ENCODE measurements at regions of chr14 and their contacts with region 1.

Region 1: GRCh38 chr14:75941030-75941429 is 40.8 kb downstream of the TGFB3 start:
- DNase-seq: no peak
- ATAC-seq: no peak
- H3K4me3 ChIP-seq: no peak overlapping the region
- H3K27ac ChIP-seq: no peak overlapping the region
- H3K4me1 ChIP-seq: no peaks in the 10 kb centered on the region
- H3K27me3 ChIP-seq: no peaks in the 10 kb centered on the region
- CTCF ChIP-seq: no peak
- EP300 ChIP-seq: no peak
- POLR2A ChIP-seq: no peak
- RAD21 ChIP-seq: no peak

Region 2: DNA sequence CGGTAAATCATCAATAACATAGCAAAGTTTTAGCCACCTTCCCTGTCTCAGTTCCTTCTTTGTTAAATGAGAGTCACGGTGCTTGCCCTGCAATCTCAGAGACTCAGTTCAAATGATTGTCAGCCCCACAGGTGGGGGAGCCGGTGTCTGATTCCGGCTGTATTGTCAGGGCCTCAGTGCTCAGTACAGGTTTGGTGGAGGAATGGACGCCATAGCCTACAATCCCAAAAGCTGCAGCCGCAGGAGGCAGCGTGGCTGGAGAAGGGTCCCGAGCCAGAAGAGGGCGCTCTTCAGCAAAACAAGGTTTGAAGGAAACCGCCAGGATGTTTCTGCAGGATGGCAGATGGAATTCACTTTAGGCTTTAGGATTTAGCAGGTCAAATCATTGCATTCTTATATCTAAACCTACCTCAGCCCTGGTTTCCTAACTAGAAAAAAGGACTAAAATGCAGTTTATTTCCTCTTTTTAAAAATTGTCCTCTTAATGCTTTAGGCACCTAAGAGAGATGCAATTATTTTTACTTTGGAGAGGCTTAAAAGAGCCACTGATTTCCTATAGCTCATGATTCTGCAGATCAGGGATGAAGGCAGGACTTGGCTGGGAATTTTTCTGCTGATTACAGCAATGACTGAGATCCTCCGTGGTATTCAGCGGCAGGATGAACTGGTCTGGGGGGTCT is 633.2 kb before region 1 on chr14:
- CTCF ChIA-PET with region 1: no interaction called
- POLR2A ChIA-PET with region 1: no interaction called
- in situ Hi-C with region 1: no loop called
- intact Hi-C with region 1: no loop called
- DNase-seq: peak; percentile 63
- ATAC-seq: peak; percentile 91
- H3K4me3 ChIP-seq: no peak overlapping the region
- H3K27ac ChIP-seq: no peak overlapping the region
- H3K4me1 ChIP-seq: peaks cover 12% of the 10 kb centered on the region
- H3K27me3 ChIP-seq: peaks cover 0 to 4% of the 10 kb centered on the region in 2 experiments; a peak in 1 of 5 replicates
- CTCF ChIP-seq: peak; percentile 93
- EP300 ChIP-seq: no peak
- POLR2A ChIP-seq: no peak
- RAD21 ChIP-seq: peak; percentile 81

Region 3: DNA sequence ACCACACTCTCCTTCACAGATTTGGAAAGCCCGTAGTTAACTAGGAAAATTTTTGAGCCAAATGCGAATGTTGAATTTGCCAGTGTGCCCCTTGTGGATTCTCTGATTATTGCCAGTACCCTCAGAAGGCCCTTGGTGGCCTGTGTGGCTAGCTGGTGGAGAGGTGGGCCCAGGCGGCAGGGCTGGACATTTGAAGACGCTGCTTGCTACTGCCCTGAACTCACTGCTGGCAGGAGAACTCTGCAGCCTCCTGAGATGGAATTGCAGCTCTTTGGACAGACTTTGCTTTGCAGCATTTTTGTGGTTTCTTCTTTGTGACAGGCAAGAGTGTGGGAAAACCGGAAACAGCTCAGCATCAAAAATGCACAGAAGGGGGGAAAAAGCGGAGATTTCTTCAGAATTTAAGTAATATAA is 56.8 kb before region 1 on chr14:
- CTCF ChIA-PET with region 1: no interaction called
- POLR2A ChIA-PET with region 1: no interaction called
- in situ Hi-C with region 1: no loop called
- intact Hi-C with region 1: no loop called
- DNase-seq: no peak
- ATAC-seq: peak; percentile 71
- H3K4me3 ChIP-seq: no peak overlapping the region
- H3K27ac ChIP-seq: no peak overlapping the region
- H3K4me1 ChIP-seq: no peaks in the 10 kb centered on the region
- H3K27me3 ChIP-seq: no peaks in the 10 kb centered on the region
- CTCF ChIP-seq: no peak
- EP300 ChIP-seq: no peak
- POLR2A ChIP-seq: no peak
- RAD21 ChIP-seq: no peak

Region 4: DNA sequence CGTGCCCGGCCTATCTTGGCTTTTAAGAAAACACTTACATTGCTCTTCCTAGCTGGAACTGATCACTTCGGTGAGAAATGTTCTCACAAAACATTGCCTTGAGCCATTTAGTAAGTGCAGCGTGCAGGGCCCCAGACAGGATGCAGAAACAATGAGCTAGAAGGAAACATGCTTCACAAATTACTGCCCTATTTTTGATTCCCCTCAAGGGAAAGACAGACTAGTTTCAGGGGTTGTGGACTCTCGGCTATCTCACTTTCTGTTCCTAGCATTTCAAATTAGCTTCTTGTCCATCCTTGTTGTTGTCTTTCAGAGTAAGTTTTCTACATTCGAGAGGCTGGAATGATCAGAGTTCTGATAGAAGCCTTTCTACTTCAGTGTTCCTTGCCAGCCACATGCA is 19.2 kb after region 1 on chr14:
- CTCF ChIA-PET with region 1: no interaction called
- POLR2A ChIA-PET with region 1: no interaction called
- in situ Hi-C with region 1: no loop called
- intact Hi-C with region 1: loop called (anchors 1 kb)
- DNase-seq: no peak
- ATAC-seq: no peak
- H3K4me3 ChIP-seq: no peak overlapping the region
- H3K27ac ChIP-seq: no peak overlapping the region
- H3K4me1 ChIP-seq: no peaks in the 10 kb centered on the region
- H3K27me3 ChIP-seq: no peaks in the 10 kb centered on the region
- CTCF ChIP-seq: no peak
- EP300 ChIP-seq: no peak
- POLR2A ChIP-seq: no peak
- RAD21 ChIP-seq: no peak